ENCODE measurements at regions of chr6 and their contacts with region 1.

Region 1: DNA sequence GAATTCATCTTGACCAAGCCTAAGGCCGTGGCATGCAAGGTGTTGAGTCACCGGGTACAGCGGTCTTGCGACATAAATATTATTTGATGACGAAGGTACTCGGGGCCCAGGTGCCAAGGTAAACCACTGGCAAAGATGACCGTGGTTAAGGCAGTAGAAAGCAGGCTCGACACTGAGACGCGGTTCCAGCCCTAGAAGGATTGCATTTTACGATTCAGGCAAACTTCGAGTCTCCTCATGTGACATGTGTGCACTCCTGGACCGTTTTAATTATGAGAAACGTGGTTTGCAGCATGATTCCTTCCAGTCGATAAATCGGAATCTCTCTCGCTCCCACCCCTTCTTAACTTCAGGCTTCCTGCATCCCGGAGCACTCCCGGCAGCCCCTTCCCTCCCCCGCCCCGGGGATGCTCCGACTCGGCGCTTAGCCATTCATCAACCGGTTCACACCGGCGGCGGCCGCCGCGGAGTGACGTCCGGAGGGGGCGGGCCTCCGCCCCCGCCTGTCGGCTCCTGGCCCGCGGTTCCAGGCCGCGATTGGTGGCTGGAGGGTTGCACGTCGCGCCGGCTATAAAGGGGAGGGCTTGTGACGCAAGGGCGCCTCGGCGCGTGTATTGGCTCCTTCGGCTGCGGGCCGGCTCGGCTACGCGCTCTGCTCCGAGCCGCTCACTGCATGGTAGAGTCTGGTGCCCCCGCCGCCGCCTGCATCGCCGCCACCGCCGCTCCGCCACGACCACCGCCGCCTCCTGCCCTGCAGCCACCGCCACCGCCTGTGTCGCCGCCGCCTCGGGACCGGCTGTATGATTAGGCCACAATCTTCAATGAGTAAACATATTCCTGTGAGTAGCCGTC is at the starts of genes LOC128125822 and PTP4A1:
- DNase-seq: peak; percentile 98 to 99 (median 98)
- ATAC-seq: peak; percentile 96 to 98 (median 98)
- H3K4me3 ChIP-seq: peak within 1 kb of the TSS; percentile 76 to 96 (median 92)
- H3K27ac ChIP-seq: peak within 1 kb of the TSS; percentile 96 to 100 (median 99)
- H3K4me1 ChIP-seq: peaks cover 0 to 37% (median 17%) of the 10 kb centered on the region in 12 donors
- H3K27me3 ChIP-seq: no peaks in the 10 kb centered on the region
- CTCF ChIP-seq: no peak
- POLR2A ChIP-seq: peak; percentile 91 to 98
- total RNA-seq, gene PTP4A1: 22.2 to 73.5 (median 43.5) TPM

Region 2: DNA sequence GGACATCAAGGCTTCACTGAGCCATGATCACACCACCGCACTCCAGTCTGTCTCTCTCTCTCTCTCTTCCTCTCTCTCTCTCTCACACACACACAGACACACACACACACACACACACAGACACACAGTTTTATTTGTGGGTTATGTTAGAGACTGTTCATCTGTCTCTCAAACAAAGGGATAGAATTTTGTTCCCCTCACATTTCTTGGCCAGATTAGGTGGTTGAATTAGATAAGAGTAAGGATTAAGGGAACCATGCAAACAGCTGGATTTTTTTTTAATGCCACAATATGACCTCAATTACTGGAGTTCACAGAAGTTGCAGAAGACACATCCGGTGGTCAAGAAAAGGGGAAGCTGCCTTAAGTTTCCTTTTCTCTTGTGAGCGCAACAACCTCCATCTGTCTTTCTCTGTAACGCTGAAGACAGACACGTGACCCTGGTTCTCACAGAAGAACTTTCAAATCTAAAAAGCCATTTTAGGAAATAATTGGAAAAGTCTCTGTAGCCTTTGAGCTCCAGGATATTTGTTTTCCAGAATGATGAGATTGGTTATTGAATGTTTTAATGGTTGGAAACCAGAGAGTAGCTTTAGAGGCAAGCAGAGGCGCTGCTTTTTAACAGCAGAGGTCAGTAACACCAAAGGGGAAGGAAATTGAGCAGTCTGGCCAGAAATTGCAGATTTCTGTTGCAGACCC is 219.4 kb before region 1 on chr6:
- intact Hi-C with region 1: loop called in 4 of 10 experiments (anchors 5 to 10 kb)
- DNase-seq: peak in 2 of 5 donors; percentile 15 to 31
- ATAC-seq: peak; percentile 51 to 88 (median 74)
- H3K4me3 ChIP-seq: peak overlapping the region in 3 of 12 donors; percentile 11 to 28 (median 23)
- H3K27ac ChIP-seq: peak overlapping the region in 3 of 12 donors; percentile 9 to 84 (median 30)
- H3K4me1 ChIP-seq: peaks cover 0 to 13% (median 0%) of the 10 kb centered on the region in 12 donors
- H3K27me3 ChIP-seq: no peaks in the 10 kb centered on the region
- CTCF ChIP-seq: peak; percentile 27 to 65 (median 52)
- POLR2A ChIP-seq: no peak

Region 3: DNA sequence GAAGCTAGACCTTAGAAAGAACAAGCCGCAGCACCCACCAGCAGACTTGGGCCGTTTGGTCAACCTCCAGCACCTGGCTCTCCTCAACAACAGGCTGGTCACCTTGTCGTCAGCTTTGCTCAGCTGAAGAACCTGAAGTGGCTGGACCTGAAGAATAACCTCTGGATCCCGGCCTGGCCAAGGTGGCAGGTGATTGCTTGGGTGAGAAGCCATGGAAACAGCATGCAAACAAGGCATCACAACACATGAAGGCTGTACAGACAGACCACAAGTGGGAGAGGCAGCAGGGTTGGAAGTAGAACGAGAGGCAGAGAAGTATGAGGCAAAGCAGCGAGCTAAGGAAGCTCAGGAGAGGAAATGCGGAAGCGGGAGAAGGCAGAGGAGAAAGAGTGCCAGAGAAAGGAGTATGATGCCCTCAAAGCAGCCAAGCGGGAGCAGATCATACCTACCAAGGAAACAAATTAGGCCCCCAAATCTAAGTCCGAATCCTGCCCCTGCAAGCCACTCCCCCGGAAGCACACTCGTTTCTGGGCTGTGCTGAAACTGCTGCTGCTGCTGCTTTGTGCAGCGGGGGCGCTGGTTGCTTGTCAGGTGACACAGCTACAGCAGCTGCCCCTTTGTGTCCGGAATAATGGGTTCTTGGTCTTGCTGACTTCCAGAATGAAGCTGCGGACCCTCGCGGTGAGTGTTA is 130.7 kb before region 1 on chr6:
- intact Hi-C with region 1: loop called in 1 of 10 experiments (anchors 10 kb)
- DNase-seq: no peak
- ATAC-seq: no peak
- H3K4me3 ChIP-seq: no peak overlapping the region
- H3K27ac ChIP-seq: no peak overlapping the region
- H3K4me1 ChIP-seq: no peaks in the 10 kb centered on the region
- H3K27me3 ChIP-seq: no peaks in the 10 kb centered on the region
- CTCF ChIP-seq: no peak
- POLR2A ChIP-seq: no peak

Region 4: DNA sequence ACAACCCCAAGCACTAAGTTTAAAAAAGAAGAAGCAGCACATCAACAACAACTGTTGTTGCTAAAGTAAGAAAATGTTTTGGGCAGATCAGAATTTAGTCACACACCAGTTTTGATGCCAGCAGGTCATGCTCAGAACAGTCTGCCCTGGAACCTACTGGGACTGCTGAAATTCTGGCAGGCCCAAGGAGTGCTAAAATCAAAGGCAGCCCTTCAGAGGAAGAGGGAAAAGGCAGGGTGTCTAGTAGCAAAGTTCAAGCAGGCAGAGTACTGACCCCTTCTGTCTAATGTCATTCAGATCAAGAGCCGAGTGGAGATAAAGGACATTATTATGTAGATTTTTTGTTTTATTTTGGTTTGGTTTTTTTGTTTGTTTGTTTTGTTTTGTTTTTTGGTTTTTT is 96.4 kb before region 1 on chr6:
- intact Hi-C with region 1: loop called in 1 of 10 experiments (anchors 2 kb)
- DNase-seq: peak in 3 of 5 donors; percentile 24 to 39 (median 32)
- ATAC-seq: peak; percentile 87 to 98 (median 94)
- H3K4me3 ChIP-seq: no peak overlapping the region
- H3K27ac ChIP-seq: peak overlapping the region in 9 of 12 donors; percentile 2 to 69 (median 49)
- H3K4me1 ChIP-seq: peaks cover 0 to 11% (median 0%) of the 10 kb centered on the region in 12 donors
- H3K27me3 ChIP-seq: no peaks in the 10 kb centered on the region
- CTCF ChIP-seq: no peak
- POLR2A ChIP-seq: no peak

Region 5: GRCh38 chr6:63516186-63516944 is 55.7 kb before region 1 on chr6:
- intact Hi-C with region 1: no loop called
- DNase-seq: no peak
- ATAC-seq: no peak
- H3K4me3 ChIP-seq: no peak overlapping the region
- H3K27ac ChIP-seq: no peak overlapping the region
- H3K4me1 ChIP-seq: no peaks in the 10 kb centered on the region
- H3K27me3 ChIP-seq: no peaks in the 10 kb centered on the region
- CTCF ChIP-seq: no peak
- POLR2A ChIP-seq: no peak

Region 6: DNA sequence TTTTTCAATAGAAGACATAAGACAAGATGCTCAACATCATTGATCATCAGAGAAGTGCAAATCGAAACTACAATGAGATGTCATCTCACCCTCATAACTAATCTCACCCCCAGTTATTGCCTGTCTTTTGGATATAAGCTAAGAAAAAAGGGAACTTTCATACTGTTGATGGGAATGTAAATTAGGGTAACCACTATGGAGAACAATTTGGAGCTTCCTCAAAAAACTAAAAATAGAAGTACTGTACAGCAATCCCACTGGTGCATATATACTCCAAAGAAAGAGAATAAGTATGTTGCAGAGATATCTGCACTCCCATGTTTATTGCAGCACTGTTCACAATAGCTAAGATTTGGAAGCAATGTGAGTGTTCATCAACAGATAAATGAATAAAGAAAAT is 37.1 kb after region 1 on chr6:
- intact Hi-C with region 1: no loop called
- DNase-seq: no peak
- ATAC-seq: no peak
- H3K4me3 ChIP-seq: no peak overlapping the region
- H3K27ac ChIP-seq: no peak overlapping the region
- H3K4me1 ChIP-seq: no peaks in the 10 kb centered on the region
- H3K27me3 ChIP-seq: no peaks in the 10 kb centered on the region
- CTCF ChIP-seq: no peak
- POLR2A ChIP-seq: no peak

Region 7: GRCh38 chr6:63635588-63636517 is 63.7 kb after region 1 on chr6 and contains the start of gene PHF3:
- intact Hi-C with region 1: loop called in 9 of 10 experiments (anchors 1 to 10 kb)
- DNase-seq: peak; percentile 90 to 95 (median 92)
- ATAC-seq: peak; percentile 88 to 98 (median 96)
- H3K4me3 ChIP-seq: peak within 1 kb of the TSS; percentile 76 to 97 (median 92)
- H3K27ac ChIP-seq: peak within 1 kb of the TSS; percentile 89 to 98 (median 96)
- H3K4me1 ChIP-seq: peaks cover 6 to 50% (median 41%) of the 10 kb centered on the region in 12 donors
- H3K27me3 ChIP-seq: no peaks in the 10 kb centered on the region
- CTCF ChIP-seq: peak in 5 of 12 donors; percentile 11 to 32 (median 22)
- POLR2A ChIP-seq: peak in 1 of 2 donors; percentile 39
- total RNA-seq, gene PHF3: 27.3 to 53.5 (median 34.4) TPM

Measured in heart left ventricle (tissue), 16 donors.